Activated T-helper 2 cell treated with anti-CD3 and anti-CD28 coated beads, Interferon-gamma antibody, Interleukin-2, Interleukin-4, amounts not matched to agents 10 μg/mL and 5 μg/mL and 100 μg/mL, durations not matched to agents 14 hours and 24 hours and 36 hours (primary cell): ENCODE measurements at regions of chr7 and their contacts with region 1.

Region 1: DNA sequence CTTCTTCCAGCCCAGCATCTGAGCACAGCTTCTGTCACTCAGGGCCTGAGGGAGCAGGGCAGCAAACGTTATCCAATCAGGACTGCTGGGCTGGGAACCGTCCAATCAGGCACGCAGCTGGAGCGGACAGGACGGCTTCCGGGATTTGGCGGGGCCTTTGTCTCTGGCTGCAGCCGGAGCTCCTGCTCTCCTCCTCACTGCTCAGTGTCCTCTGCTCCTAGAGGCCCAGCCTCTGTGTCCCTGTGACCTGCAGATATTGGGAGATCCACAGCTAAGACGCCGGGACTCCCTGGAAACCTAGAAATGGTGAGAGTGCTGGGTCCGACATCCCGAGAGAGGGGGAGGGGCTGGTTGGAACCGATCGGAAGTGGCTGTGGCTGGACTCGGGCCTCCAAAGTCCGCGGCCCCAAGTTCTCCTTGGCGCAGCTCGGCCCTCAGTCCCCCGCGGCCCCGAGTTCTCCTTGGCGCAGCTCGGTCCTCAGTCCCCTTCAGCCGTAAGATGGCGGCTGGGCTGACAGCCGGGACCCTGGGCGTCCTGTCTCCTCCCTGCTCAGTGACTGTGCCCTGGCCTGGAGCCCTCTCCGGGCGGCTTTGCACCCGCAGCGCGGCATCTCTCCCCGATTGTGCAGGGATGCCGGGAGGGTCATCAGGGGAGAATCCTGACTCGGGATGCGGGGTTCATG is at the start of gene ZNF107:
- DNase-seq: peak; percentile 83
- H3K4me3 Mint-ChIP-seq: peak within 1 kb of the TSS; percentile 97
- H3K27ac Mint-ChIP-seq: peak within 1 kb of the TSS; percentile 92
- H3K4me1 Mint-ChIP-seq: peaks cover 11% of the 10 kb centered on the region
- H3K27me3 Mint-ChIP-seq: no peaks in the 10 kb centered on the region
- total RNA-seq, gene ZNF107: 12.8 and 13.1 TPM in 2 replicates

Region 2: DNA sequence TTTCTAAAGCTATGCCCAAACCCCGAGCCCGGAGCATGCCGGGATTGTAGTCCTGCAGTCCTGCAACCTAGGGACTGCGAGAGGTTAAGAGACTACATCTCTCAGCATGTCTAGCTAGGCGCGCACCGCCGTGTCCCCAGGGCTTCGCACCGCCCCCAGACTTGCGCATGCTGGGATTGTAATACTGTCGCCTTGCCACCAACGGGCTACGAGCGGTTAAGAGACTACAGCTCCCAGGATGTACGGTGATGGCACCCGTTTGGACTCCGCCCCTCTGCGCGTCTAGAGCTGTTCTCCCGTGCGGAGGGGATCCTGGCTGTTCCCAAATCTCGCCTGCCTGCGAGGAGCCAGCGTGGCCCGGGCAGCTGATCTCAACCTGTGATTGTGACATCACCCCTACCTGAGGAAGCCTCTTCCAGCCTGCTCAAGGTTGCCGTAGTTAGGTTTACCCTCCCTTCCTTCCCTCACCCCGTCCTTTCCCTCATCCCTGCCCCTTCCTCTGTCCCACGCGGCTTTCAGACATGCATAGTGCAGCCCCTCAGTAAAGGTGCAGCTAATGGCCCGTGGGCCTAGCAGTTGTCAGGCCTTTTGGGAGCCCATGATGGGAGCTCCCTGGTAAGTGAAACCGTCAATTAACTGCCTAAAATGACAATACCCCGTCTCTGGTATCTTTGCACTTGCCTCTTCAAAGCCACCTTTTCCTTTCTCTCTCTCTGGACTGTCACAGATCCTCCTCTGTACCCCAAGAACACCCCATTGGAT is 358.7 kb before region 1 on chr7:
- intact Hi-C with region 1: loop called (anchors 2 kb)
- DNase-seq: peak; percentile 92
- H3K4me3 Mint-ChIP-seq: peak overlapping the region; percentile 97
- H3K27ac Mint-ChIP-seq: peak overlapping the region; percentile 91
- H3K4me1 Mint-ChIP-seq: peaks cover 12% of the 10 kb centered on the region
- H3K27me3 Mint-ChIP-seq: no peaks in the 10 kb centered on the region

Region 3: DNA sequence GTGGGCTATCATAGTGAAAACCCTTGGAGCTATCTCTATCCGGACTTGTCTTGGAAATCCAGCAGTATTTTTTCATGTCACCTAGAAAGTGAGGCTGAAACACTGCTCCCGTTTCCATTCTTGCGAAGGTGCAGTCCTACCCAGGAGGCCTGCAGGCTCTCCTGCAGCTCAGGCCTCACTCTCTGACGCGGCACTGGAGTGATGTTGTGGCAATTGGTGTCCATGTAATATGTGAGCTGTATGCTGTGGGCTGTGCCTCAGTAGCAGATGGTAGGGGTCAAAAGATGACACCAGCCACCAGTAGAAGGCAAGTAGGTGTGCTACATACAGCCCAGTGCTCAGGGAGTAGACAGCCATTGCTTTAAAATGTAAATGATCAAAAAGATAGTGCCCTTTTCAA is 75.2 kb before region 1 on chr7:
- intact Hi-C with region 1: no loop called
- DNase-seq: no peak
- H3K4me3 Mint-ChIP-seq: no peak overlapping the region
- H3K27ac Mint-ChIP-seq: no peak overlapping the region
- H3K4me1 Mint-ChIP-seq: no peaks in the 10 kb centered on the region
- H3K27me3 Mint-ChIP-seq: no peaks in the 10 kb centered on the region

Region 4: GRCh38 chr7:64650971-64651781 is 14.9 kb before region 1 on chr7:
- intact Hi-C with region 1: no loop called
- DNase-seq: no peak
- H3K4me3 Mint-ChIP-seq: no peak overlapping the region
- H3K27ac Mint-ChIP-seq: no peak overlapping the region
- H3K4me1 Mint-ChIP-seq: no peaks in the 10 kb centered on the region
- H3K27me3 Mint-ChIP-seq: no peaks in the 10 kb centered on the region

Region 5: DNA sequence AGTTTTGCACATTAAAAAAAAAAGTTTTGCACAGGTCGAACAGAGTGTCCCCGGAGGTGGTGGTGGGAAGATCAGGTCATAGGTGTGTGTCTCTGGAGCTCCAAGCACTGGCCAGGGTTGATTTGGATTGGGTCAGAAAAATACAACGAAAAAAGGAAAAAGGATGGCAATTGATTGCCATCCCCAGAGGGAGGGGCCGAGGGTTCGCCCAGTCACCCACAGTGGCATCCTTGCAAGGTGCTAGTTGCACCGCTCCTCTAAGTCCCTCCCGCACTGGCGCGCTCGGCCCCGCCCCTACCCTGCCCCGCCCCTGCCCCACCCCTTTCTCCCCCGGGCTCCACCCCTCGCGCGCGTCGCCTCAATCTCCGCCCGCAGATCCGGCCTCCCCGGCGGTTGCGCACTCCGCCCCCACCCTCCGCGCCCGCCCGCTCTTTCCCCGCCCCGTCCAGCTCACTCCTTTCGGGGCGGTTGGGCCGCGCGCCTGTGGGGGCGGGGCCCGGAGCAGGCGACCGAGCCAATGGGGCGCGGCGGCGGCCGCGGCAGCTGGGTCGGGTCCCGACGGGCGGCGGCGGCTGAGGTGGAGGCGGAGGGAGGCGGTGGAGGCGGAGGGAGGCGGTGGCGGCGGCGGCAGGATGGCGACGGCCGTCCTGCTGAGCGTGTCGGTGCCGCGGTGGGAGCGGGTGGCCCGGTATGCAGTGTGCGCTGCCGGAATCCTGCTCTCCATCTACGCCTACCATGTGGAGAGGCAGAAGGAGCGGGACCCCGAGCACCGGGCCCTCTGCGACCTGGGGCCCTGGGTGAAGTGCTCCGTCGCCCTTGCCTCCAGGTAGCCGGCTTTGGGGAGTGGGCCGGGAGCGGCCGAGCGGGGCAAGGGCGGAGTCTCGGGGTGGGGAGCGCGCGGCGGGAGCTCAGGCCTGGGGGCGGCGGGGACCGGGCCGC is 371.9 kb after region 1 on chr7:
- intact Hi-C with region 1: loop called (anchors 10 kb)
- DNase-seq: peak; percentile 85
- H3K4me3 Mint-ChIP-seq: peak overlapping the region; percentile 74
- H3K27ac Mint-ChIP-seq: peak overlapping the region; percentile 70
- H3K4me1 Mint-ChIP-seq: peaks cover 16% of the 10 kb centered on the region
- H3K27me3 Mint-ChIP-seq: no peaks in the 10 kb centered on the region